Gastrocnemius medialis (tissue), 4 donors: ENCODE measurements at regions of chr1 and their contacts with region 1.

Region 1: DNA sequence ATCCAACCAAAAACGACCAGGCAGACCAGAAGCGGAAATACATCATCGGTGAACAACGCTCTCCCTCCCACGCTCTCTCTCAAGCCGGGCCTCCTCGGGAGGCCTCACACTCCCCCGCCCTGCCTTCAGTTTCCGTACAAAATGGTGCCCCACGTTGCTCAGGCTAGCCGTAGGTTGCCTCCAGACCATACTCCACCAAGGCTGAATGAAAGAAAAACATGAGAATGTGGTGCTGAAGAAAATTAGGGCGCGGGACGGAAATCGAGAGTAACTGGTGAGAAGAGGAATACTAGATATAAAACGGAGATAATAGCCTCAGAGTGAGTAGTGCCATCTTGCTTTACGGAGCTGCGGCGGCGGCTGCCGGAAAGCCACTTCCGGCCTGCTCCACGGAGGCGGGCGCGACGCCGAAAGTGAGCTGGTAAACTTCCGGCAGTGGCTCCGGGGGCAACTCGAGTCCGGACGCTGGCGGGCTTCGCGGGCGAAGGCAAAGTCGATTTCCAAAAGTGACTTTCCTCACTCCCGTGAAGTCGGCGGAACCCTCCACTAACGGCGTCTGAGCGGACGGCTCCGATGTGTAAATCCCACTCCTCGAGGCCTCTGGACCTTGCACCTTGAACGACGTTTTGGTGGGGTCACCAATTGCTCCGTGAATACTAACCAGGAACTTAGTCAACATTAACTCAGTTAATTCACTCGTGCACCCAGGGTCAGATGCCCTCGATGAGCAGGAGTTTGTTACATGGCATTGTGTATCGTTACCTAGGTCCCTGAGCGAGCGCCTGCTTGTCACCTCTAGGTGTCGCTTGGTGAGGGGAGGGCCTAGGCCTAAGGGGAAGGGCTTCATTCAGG is at the start of gene SH3BP5L:
- DNase-seq: peak; percentile 93 to 94
- ATAC-seq: peak; percentile 94 to 96
- H3K4me3 ChIP-seq: peak within 1 kb of the TSS; percentile 75 to 97 (median 94)
- H3K27ac ChIP-seq: peak within 1 kb of the TSS; percentile 95 to 100 (median 98)
- H3K4me1 ChIP-seq: peaks cover 51 to 54% of the 10 kb centered on the region in 2 donors
- H3K27me3 ChIP-seq: no peaks in the 10 kb centered on the region
- CTCF ChIP-seq: peak; percentile 26 to 81 (median 46)
- POLR2A ChIP-seq: peak; percentile 62 to 67
- total RNA-seq, gene SH3BP5L: 15.7 to 26.4 (median 22.8) TPM

Region 2: DNA sequence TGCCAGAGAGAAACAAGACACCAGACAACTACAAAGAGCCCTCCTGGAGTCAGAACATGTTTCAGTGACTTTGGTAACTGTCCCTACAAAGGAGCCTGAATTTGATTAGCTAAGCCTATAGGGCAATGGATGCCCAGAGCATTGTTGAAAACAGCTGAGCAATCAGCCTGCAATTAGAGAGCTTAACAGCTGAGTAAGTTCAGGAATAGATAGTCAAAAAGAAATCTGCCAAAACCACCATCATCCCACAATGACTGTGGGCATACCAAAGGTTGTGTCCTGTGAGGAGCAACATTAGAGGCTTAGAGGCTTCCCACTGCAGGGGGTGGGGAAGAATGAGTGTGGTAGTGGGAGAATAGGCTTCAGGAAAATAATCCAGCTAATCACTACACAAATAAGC is 32.5 kb before region 1 on chr1:
- in situ Hi-C with region 1: no loop called
- intact Hi-C with region 1: no loop called
- DNase-seq: no peak
- ATAC-seq: no peak
- H3K4me3 ChIP-seq: no peak overlapping the region
- H3K27ac ChIP-seq: no peak overlapping the region
- H3K4me1 ChIP-seq: no peaks in the 10 kb centered on the region
- H3K27me3 ChIP-seq: no peaks in the 10 kb centered on the region
- CTCF ChIP-seq: no peak
- POLR2A ChIP-seq: no peak

Region 3: GRCh38 chr1:248837794-248838356 is 11.7 kb after region 1 on chr1 and contains the start of gene ZNF672:
- in situ Hi-C with region 1: no loop called
- intact Hi-C with region 1: loop called (anchors 1 kb)
- DNase-seq: peak; percentile 98 to 99
- ATAC-seq: peak; percentile 82 to 84
- H3K4me3 ChIP-seq: peak within 1 kb of the TSS; percentile 68 to 98 (median 83)
- H3K27ac ChIP-seq: peak within 1 kb of the TSS; percentile 95 to 100 (median 98)
- H3K4me1 ChIP-seq: peaks cover 37 to 44% of the 10 kb centered on the region in 2 donors
- H3K27me3 ChIP-seq: no peaks in the 10 kb centered on the region
- CTCF ChIP-seq: no peak
- POLR2A ChIP-seq: no peak
- total RNA-seq, gene ZNF672: 41.9 to 81.0 (median 59.0) TPM

Region 4: DNA sequence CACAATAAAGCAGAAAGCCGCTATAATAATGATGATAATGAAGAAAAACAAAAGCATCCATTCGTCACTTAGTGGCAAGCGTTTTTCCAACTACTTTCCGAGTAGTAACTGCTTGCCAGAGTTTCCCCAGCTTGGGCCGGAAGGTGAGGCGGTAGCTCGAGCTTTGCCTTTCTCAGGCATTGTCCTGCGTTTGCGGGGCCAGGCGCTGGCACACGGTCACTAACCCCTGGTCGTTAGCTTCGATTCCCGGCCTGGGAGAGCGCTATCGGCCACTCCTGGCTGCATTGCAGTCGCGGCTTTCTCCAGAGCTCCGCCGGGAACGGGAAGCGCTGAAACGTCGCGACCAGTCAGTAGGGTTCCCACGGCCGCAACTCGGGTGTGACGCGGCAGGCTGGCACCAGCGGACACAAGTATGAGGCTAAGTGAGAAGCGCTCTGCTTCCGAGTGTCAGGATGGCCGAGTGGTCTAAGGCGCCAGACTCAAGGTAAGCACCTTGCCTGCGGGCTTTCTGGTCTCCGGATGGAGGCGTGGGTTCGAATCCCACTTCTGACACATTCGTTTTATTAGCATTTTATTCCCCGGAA is 47.4 kb after region 1 on chr1:
- in situ Hi-C with region 1: no loop called
- intact Hi-C with region 1: loop called (anchors 1 kb)
- DNase-seq: peak; percentile 85 to 93
- ATAC-seq: peak; percentile 90 to 92
- H3K4me3 ChIP-seq: peak overlapping the region; percentile 72 to 83 (median 74)
- H3K27ac ChIP-seq: peak overlapping the region; percentile 90 to 98 (median 93)
- H3K4me1 ChIP-seq: no peaks in the 10 kb centered on the region
- H3K27me3 ChIP-seq: no peaks in the 10 kb centered on the region
- CTCF ChIP-seq: no peak
- POLR2A ChIP-seq: peak in 1 of 2 donors; percentile 31

Region 5: DNA sequence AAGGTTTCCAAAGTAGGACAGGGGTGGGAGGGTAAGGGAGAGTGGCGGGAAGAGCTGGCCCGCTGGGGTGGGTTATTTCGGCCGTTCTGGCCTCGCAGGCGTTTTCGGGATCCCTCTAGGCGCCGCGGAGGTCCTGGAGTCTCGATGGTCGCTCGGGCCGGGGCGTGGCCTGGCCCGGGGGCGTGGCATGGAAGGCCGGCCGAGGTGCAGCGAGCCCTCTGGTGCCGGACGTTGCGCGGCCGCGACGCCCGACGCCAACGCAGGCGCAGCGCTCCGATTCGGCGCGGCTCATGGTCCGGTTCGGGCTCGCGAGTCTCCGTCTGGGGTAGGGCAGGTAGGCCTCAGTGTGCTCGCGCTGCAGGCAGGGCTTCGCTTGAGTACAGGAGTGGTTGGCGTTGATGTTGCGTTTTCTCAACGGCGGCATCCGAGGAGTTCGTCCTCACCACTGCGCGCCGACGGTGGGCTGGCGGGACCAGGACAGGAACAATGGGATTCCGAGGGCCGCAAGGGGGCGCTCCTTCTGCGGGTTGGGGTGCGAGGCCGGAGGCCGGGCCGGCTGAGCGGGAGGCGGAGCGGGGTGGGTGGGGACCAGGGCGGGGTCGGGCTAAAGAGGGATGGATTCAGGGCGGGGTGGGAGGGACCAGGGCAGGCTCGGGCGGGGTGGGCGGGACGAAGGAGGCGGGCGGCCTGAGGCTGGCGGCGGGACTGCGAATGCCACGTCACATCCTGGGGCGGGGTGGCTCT is 80.0 kb after region 1 on chr1 and contains the start of gene PGBD2:
- in situ Hi-C with region 1: no loop called
- intact Hi-C with region 1: loop called (anchors 1 kb)
- DNase-seq: peak; percentile 80 to 84
- ATAC-seq: peak; percentile 92 to 94
- H3K4me3 ChIP-seq: peak within 1 kb of the TSS; percentile 65 to 95 (median 84)
- H3K27ac ChIP-seq: peak within 1 kb of the TSS; percentile 82 to 95 (median 87)
- H3K4me1 ChIP-seq: peaks cover 6 to 9% of the 10 kb centered on the region in 2 donors
- H3K27me3 ChIP-seq: peaks cover 0 to 3% (median 0%) of the 10 kb centered on the region in 3 donors
- CTCF ChIP-seq: peak; percentile 17 to 67 (median 63)
- POLR2A ChIP-seq: peak; percentile 59 to 71
- total RNA-seq, gene PGBD2: 0.22 to 2.8 (median 2.0) TPM